Left cardiac atrium (tissue), 4 donors: ENCODE measurements at regions of chr1 and their contacts with region 1.

Region 1: GRCh38 chr1:101136739-101137138 is 100.1 kb upstream of the S1PR1 start:
- DNase-seq: no peak
- ATAC-seq: peak; percentile 60 to 65

Region 2: DNA sequence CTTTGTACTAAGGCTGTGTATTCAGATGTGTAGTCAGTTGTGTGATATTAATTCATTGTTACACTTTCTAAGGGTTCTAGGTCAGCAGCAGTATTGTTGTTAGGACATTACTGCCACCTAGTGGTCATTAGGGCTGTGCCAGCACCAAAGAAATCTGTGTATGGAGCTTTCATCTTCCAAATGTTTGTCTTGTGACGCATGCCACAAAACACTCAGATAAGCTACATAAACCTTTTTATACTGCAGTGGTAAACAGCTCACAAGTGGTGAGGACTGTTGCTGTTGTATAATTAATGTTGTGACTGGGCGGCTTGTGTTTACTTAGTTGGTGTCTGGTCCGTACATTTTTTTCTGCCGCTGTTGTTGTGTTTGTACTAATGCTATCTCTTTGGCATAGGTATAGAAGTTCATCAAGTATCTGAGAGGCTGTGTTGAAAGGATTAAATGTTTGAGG is 151.8 kb after region 1 on chr1:
- intact Hi-C with region 1: loop called in 1 of 2 experiments (anchors 10 kb)
- DNase-seq: peak; percentile 66
- ATAC-seq: peak; percentile 92 to 93